Panc1 (cell line): ENCODE measurements at regions of chr1 and their contacts with region 1.

Region 1: DNA sequence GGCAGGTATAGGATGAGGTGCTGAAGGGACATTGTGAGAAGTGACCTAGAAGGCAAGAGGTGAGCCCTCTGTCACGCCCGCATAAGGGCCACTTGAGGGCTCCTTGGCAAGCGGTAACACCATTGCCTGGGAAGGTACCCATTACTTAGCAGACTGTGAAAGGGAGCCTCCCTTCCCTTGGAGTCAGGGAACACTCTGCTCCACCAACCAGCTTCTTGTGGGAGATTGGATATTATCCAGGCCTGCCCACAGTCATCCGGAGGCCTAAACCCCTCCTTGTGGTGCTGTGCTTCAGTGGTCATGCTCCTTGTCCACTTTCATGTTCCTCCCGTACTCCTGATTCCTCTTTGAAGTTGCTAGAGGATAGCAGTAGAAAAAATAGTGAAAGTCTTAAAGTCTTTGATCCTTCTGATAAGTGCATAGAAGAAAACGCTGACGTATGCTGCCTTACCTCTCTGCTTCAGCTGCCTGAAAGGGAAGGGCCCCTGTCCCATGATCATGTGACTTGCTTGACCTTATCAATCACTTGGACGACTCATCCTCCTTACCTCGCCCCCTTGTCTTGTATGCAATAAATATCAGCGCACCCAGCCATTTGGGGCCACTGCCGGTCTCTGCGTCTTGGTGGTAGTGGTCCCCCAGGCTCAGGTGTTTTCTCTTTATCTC is 16.0 kb downstream of the RBBP4 start:
- DNase-seq: no peak
- ATAC-seq: no peak
- H3K4me3 ChIP-seq: no peak overlapping the region
- H3K27ac ChIP-seq: no peak overlapping the region
- H3K4me1 ChIP-seq: no peaks in the 10 kb centered on the region
- H3K27me3 ChIP-seq: no peaks in the 10 kb centered on the region
- CTCF ChIP-seq: no peak

Region 2: GRCh38 chr1:32286763-32287162 is 380.3 kb before region 1 on chr1:
- CTCF ChIA-PET with region 1: interaction called, 15 read pairs
- POLR2A ChIA-PET with region 1: no interaction called
- in situ Hi-C with region 1: no loop called
- intact Hi-C with region 1: no loop called
- DNase-seq: no peak
- ATAC-seq: no peak
- H3K4me3 ChIP-seq: no peak overlapping the region
- H3K27ac ChIP-seq: no peak overlapping the region
- H3K4me1 ChIP-seq: peaks cover 10% of the 10 kb centered on the region; the same call in 1 of the 2 replicates
- H3K27me3 ChIP-seq: no peaks in the 10 kb centered on the region
- CTCF ChIP-seq: no peak